ENCODE measurements at regions of chr5 and their contacts with region 1.

Region 1: DNA sequence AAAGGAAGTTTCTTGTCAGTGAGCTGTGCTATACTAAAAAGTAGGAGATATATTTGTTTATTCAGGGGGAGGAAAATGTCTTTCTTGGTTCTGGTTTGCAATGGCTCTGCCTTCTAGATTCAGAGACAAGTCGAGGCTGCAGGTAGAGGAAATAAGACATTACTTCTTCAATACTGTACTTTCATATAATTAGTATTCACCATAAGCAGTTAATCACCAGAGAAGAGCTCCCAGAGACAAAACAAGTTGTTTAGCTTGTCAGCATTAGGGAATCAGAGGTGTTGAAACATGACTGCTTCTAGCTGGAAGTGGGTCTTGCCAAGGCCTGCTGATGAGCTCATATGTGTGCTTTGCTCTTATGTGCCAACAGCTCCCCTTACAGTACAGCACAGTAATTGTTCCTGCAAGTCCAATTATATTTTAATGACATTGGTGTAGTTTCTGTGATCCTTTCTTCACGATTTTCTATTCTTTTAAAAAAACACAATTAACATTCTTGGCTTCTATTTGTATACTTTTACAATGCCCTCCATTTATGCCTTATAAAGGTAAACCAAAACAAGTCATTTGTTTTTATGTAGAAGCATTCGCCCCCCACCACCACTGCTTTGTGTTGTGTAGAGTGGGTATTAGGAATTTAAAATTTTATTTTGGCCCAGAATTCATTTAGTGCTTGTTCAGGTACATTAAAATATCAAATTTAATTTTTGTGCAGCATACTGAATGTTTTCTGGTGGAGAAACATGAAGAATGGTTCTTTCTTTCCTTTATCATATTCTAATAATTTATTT is 112.2 kb downstream of the RPS23 start:
- DNase-seq: peak; percentile 90
- H3K4me3 ChIP-seq: no peak overlapping the region
- H3K27ac ChIP-seq: peak overlapping the region; percentile 56
- H3K4me1 ChIP-seq: peaks cover 46% of the 10 kb centered on the region
- H3K27me3 ChIP-seq: no peaks in the 10 kb centered on the region
- CTCF ChIP-seq: peak; percentile 85

Region 2: DNA sequence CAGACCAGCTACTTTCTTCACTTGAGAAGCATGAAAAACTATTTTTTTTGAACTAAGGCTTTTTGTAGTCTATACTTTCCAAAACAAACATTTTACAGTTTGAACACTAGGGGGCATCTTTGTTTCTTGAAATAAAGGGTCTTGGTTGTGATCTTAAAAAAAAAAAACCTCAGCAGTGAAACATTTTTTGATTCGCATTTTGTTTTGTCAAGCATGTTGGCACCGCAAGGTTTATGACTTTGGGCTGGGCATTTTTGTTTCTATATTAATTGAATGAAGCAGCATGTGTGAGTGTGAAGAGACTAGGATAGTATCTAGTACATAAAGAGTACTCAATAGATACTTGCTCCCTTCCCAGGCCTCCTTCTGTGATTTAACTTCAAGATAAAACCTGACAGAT is 740.4 kb before region 1 on chr5:
- CTCF ChIA-PET with region 1: interaction called, 7 read pairs
- POLR2A ChIA-PET with region 1: no interaction called
- intact Hi-C with region 1: loop called (anchors 5 kb)
- DNase-seq: peak; percentile 76
- H3K4me3 ChIP-seq: no peak overlapping the region
- H3K27ac ChIP-seq: no peak overlapping the region
- H3K4me1 ChIP-seq: peaks cover 14% of the 10 kb centered on the region
- H3K27me3 ChIP-seq: no peaks in the 10 kb centered on the region
- CTCF ChIP-seq: peak; percentile 69

Region 3: DNA sequence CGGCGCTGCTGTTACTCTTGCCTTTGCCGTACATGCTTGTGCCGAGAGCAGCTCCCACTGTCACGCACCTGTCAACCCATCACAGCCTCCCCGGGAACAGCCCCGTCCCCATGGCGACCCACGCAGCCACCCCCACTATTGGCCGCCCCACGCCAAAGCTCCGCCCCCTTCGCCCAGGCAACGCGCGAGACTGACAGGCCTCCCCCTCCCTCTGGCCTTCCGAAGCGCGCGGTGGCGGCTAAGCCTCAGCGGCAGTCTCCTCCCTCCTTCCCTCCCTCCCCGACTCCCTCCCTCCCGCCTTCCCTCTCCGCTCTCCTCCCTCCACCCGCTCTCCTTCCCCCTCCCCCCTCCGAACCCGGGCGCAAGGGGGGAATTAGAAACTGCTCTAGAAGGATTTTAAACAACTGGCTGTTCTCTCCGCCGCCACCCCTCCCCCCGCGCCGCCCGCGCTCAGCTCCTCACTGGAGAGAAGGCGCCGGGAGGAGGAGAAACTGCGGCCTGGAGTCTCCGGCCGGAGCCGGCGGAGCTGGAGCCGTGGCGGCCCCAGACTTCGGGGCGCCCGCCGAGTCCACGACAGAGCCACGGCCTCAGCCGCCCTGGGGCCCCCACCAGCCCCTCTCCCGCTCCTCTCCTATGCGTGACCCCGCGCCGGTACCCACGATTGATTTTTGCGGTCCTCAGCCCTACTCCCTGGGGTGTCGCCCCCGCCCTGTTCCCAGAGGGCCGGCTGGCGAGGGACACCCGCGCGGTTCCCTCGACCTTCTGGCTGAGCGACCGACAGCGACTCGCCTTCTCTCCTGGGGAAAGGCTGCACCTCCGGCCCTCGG is 414.7 kb before region 1 on chr5 and contains the start of gene SSBP2:
- CTCF ChIA-PET with region 1: no interaction called
- POLR2A ChIA-PET with region 1: no interaction called
- intact Hi-C with region 1: loop called (anchors 5 kb)
- DNase-seq: peak; percentile 99
- H3K4me3 ChIP-seq: peak within 1 kb of the TSS; percentile 82
- H3K27ac ChIP-seq: peak within 1 kb of the TSS; percentile 95
- H3K4me1 ChIP-seq: peaks cover 71% of the 10 kb centered on the region
- H3K27me3 ChIP-seq: no peaks in the 10 kb centered on the region
- CTCF ChIP-seq: no peak
- total RNA-seq, gene SSBP2: 42.8 and 53.7 TPM in 2 replicates

Region 4: GRCh38 chr5:81965524-81965923 is 200.4 kb before region 1 on chr5:
- CTCF ChIA-PET with region 1: no interaction called
- POLR2A ChIA-PET with region 1: no interaction called
- intact Hi-C with region 1: loop called (anchors 5 kb)
- DNase-seq: no peak
- H3K4me3 ChIP-seq: no peak overlapping the region
- H3K27ac ChIP-seq: no peak overlapping the region
- H3K4me1 ChIP-seq: no peaks in the 10 kb centered on the region
- H3K27me3 ChIP-seq: no peaks in the 10 kb centered on the region
- CTCF ChIP-seq: no peak